Activated CD4-positive, alpha-beta T cell treated with anti-CD3 and anti-CD28 coated beads, Interleukin-2, amount 10 ng/mL, durations not matched to agents 7 days and 5 days (primary cell): ENCODE measurements at regions of chr2 and their contacts with region 1.

Region 1: GRCh38 chr2:218892693-218893348 is 12.2 kb downstream of the WNT10A start:
- DNase-seq: peak; percentile 83
- H3K4me3 Mint-ChIP-seq: peak overlapping the region; percentile 47
- H3K27ac Mint-ChIP-seq: peak overlapping the region; percentile 83
- H3K4me1 Mint-ChIP-seq: peaks cover 45% of the 10 kb centered on the region
- H3K27me3 Mint-ChIP-seq: peaks cover 42% of the 10 kb centered on the region

Region 2: DNA sequence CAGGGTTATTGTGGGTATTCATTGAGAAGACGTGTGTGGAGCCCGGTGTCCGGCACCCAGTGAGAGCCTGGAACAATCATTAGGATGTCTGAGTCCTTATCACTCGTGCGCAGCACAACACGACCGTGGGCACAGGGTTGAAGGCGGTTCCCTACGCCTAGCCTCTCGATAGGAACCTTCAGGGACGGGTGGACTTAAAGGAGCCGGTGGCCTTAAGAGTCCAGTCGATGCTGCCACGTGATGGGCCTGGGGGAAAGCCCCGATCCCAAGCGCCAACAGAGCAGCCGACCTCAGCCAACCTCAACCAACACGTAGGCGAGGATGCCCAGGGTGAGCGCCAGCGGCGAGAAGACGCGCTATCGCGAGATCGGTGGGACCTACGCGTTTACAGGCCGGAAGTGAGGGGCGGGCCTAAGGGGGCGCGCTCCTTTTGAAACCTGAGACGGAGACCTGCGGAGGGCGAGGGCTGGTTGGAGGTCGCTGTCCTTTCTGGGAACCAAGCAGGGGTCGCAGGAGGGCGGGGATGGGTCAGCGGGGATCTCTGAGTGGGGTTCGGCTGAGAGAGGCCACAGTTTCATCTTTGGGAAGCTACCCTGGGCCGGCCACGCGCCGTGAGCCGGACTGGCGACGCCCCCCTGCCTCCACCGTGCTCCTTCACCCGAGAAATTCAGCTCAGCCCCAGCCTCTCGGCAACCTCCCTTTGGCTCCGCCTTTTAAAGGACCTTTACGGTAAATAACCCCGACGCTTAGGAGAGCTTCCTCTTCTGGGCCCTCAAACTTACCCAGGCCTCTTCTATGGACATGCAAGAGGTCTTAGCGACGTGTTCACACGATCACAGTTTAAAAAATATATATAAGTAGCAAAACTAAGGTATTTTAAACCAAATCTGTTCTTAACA is 16.1 kb after region 1 on chr2:
- CTCF ChIA-PET with region 1: interaction called, 669 read pairs
- POLR2A ChIA-PET with region 1: no interaction called
- DNase-seq: peak; percentile 88
- H3K4me3 Mint-ChIP-seq: peak overlapping the region; percentile 81
- H3K27ac Mint-ChIP-seq: peak overlapping the region; percentile 88
- H3K4me1 Mint-ChIP-seq: peaks cover 17% of the 10 kb centered on the region
- H3K27me3 Mint-ChIP-seq: peaks cover 17% of the 10 kb centered on the region

Region 3: DNA sequence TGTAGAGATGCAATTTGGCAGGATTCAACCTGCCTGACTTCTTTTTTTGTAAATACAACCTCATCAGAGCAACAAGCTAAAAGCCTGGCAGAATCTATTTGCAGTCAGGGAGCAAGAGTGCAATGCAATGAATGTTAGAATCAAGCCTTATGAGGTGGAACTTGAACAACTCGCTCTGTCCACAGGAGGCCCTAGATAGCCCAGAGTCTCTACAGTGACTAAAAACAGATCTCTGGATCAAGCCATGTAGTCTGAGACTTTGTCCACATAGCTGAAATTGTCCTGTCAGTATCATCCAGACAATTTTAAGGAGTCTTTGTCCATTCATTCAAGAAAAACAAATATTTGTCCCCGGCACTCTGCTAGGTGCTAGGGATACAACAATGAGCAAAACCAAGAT is 34.6 kb after region 1 on chr2:
- CTCF ChIA-PET with region 1: no interaction called
- POLR2A ChIA-PET with region 1: no interaction called
- DNase-seq: no peak
- H3K4me3 Mint-ChIP-seq: no peak overlapping the region
- H3K27ac Mint-ChIP-seq: no peak overlapping the region
- H3K4me1 Mint-ChIP-seq: no peaks in the 10 kb centered on the region
- H3K27me3 Mint-ChIP-seq: peaks cover 20% of the 10 kb centered on the region

Region 4: GRCh38 chr2:218953481-218953881 is 60.7 kb after region 1 on chr2:
- CTCF ChIA-PET with region 1: no interaction called
- POLR2A ChIA-PET with region 1: no interaction called
- DNase-seq: no peak
- H3K4me3 Mint-ChIP-seq: no peak overlapping the region
- H3K27ac Mint-ChIP-seq: no peak overlapping the region
- H3K4me1 Mint-ChIP-seq: no peaks in the 10 kb centered on the region
- H3K27me3 Mint-ChIP-seq: peaks cover 42% of the 10 kb centered on the region